ENCODE measurements at regions of chr6 and their contacts with region 1.

Region 1: GRCh38 chr6:142773859-142774648 is 170.9 kb downstream of the HIVEP2 start:
- DNase-seq: no peak
- ATAC-seq: no peak
- H3K4me3 ChIP-seq: no peak overlapping the region
- H3K27ac ChIP-seq: no peak overlapping the region
- H3K4me1 ChIP-seq: no peaks in the 10 kb centered on the region
- H3K27me3 ChIP-seq: no peaks in the 10 kb centered on the region
- CTCF ChIP-seq: no peak

Region 2: DNA sequence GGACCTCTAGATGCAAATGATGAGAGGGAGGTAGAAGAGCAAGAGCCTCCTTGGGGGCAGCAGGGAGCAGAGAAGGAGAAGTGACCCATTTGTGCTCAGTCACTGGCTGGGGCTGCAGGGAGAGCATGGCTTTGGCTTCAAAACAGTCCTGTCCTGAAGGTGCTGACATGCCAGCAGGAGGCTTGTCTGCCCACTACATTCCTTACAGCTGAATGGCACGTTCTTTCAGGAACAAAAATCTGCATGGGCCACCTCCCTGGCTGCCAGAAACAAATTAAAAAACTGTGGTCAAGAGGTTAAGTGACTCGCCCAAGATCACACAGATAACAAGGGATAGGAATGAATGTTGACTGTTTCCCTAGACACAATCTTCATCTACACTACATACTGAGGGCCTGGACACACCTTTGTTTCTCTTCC is 17.8 kb before region 1 on chr6:
- CTCF ChIA-PET with region 1: no interaction called
- POLR2A ChIA-PET with region 1: no interaction called
- in situ Hi-C with region 1: no loop called
- intact Hi-C with region 1: no loop called
- DNase-seq: no peak
- ATAC-seq: peak; percentile 86
- H3K4me3 ChIP-seq: no peak overlapping the region
- H3K27ac ChIP-seq: no peak overlapping the region
- H3K4me1 ChIP-seq: no peaks in the 10 kb centered on the region
- H3K27me3 ChIP-seq: no peaks in the 10 kb centered on the region
- CTCF ChIP-seq: no peak

Region 3: DNA sequence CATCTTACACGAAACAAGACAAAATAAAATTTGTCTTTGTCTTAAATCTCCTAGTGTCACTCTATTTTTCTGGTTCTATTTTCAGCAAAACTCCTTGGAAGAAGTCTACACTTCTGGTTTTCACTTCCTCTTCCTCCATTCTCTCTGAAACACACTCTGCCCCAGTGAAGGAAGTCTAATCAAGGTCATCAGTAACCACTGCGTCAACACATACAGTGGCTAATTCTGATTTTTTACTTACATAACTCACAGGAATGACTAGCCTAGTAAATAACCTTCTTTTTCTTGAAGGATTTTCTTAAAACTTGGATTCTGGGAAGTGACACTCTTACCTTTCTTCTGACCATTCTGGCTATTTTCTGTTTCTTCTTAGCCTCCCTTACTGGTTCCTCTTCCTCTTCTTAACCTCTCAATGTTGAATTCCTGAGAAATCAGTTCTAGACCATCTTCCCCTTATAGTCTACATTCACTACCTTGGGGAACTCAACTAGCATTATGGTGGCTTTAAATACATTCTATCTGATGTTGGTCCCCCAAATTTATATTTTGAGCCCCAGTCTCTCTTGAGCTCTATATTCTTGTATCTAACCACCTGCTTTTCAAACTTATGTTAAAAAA is 324.1 kb after region 1 on chr6:
- CTCF ChIA-PET with region 1: no interaction called
- POLR2A ChIA-PET with region 1: no interaction called
- in situ Hi-C with region 1: no loop called
- intact Hi-C with region 1: no loop called
- DNase-seq: no peak
- ATAC-seq: no peak
- H3K4me3 ChIP-seq: no peak overlapping the region
- H3K27ac ChIP-seq: no peak overlapping the region
- H3K4me1 ChIP-seq: no peaks in the 10 kb centered on the region
- H3K27me3 ChIP-seq: no peaks in the 10 kb centered on the region
- CTCF ChIP-seq: no peak

Region 4: DNA sequence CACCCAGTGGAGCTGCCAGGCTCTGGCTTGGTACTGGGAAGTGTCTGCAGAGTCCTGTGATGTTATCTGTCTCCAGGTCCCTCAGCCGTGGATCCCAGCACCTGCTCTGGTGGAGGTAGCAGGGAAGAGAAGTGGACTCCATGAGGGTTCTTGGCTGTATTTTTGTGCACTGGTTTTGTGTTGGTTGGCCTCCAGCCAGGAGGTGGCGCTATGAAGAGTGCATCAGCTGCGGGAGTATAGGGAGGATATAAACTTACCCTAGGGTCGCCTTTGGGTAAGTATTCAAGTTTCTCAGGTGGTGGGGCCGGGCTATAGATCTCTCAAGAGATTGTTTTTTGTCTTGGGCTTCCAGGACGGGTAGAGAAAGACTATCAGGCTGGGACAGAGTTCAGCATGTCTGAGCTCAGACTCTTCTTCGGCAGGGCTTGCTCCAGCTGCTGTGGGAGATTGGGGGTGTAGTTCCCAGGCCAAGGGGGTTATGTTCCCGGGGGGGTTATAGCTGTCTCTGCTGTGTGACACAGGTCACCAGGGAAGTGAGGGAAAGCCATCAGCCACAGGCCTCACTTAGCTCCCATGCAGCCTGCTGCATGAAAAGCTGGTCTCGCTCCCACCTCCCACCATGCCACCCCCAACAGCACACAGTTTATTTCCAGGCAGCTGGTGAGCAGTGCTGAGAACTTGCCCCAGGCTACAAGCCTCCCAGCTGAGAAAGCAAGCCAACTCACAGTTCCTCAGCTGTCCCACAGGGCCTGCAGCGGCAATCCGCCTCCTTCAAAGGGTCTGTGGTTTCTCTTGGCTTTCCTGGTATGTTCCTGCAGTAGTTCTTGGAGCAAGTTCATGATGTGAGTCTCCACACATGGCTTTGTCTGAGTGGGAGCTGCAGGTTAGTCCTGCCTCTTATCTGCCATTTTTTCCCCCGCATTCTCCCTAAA is 402.3 kb after region 1 on chr6:
- CTCF ChIA-PET with region 1: interaction called, 11 read pairs
- POLR2A ChIA-PET with region 1: no interaction called
- in situ Hi-C with region 1: no loop called
- intact Hi-C with region 1: no loop called
- DNase-seq: no peak
- ATAC-seq: peak; percentile 76
- H3K4me3 ChIP-seq: no peak overlapping the region
- H3K27ac ChIP-seq: no peak overlapping the region
- H3K4me1 ChIP-seq: no peaks in the 10 kb centered on the region
- H3K27me3 ChIP-seq: no peaks in the 10 kb centered on the region
- CTCF ChIP-seq: peak; percentile 55

Measured in Panc1 (cell line).